Activated T-helper 1 cell treated with anti-CD3 and anti-CD28 coated beads, Interleukin-12 subunit alpha, Interleukin-12 subunit beta, Interleukin-2, Interleukin-4 antibody, amounts not matched to agents 30 ng/mL and 10 ng/mL and 1 ng/mL, durations not matched to agents 14 hours and 24 hours and 36 hours (primary cell): ENCODE measurements at regions of chr3 and their contacts with region 1.

Region 1: DNA sequence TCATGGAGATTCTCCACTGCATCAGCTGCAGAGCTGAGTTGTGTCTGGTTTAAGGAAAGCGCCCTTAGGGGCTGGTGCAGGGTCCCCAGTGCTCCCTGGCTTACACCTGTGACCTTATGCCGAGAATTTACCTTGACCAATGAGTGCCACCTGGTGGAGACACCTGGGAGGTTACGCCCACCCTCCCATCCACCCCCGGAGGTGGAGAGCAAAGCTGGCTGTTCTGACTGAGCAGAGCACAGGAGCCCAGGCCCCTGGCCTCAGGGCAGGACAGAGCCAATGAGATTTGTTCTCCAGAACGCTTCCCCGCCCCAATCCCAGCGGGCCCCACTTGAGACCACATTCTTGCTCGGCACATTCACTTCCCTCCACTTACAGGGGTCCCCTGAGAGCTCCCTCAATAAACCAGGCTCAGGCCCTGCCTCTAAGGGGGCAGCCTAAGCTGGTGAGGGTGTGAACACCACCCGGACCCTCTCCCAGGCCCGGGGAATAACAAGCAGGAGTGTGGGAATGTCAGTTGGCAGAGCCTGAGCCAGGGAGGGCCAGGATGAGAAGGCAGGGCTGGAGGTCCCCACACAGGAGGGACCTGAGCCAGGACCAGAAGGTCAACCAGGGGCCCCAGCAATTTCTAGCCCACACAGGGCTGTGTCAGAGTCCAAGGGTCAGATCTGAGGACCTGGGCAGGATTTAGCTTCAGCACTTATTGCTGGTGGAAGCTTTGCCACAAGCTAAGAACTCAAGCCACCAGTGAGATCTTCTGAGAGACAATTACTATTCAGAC is 117.1 kb downstream of the TPRA1 start:
- DNase-seq: no peak
- H3K4me3 Mint-ChIP-seq: no peak overlapping the region
- H3K27ac Mint-ChIP-seq: no peak overlapping the region
- H3K4me1 Mint-ChIP-seq: no peaks in the 10 kb centered on the region
- H3K27me3 Mint-ChIP-seq: peaks cover 8% of the 10 kb centered on the region

Region 2: DNA sequence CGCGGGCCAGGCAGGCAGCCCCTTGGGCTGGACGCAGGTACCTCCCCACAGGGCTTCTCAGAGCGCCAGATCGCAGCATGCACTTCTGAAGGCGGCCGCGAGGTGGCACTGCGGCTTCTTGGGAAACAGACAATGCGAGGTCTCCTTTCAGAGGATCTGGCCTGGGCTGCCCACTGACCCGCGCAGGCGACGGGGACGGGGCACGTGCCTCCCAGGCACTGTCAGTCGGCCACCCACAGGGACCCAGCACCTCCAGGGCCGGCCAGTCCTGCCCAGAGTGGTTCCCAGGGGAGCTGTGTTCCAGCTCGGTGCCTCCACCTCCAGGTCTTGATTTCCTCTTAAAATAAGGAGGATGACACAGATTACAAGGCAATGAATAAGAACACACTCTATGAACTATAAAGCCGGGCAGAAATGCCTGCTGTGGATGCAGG is 794.1 kb before region 1 on chr3:
- intact Hi-C with region 1: loop called (anchors 5 kb)
- DNase-seq: peak; percentile 61
- H3K4me3 Mint-ChIP-seq: peak overlapping the region; percentile 21
- H3K27ac Mint-ChIP-seq: no peak overlapping the region
- H3K4me1 Mint-ChIP-seq: peaks cover 4% of the 10 kb centered on the region
- H3K27me3 Mint-ChIP-seq: no peaks in the 10 kb centered on the region

Region 3: GRCh38 chr3:127485396-127486170 is 12.1 kb after region 1 on chr3:
- intact Hi-C with region 1: no loop called
- DNase-seq: no peak
- H3K4me3 Mint-ChIP-seq: no peak overlapping the region
- H3K27ac Mint-ChIP-seq: no peak overlapping the region
- H3K4me1 Mint-ChIP-seq: peaks cover 19% of the 10 kb centered on the region
- H3K27me3 Mint-ChIP-seq: peaks cover 19% of the 10 kb centered on the region